A549 (cell line): ENCODE measurements at regions of chr10 and their contacts with region 1.

Region 1: DNA sequence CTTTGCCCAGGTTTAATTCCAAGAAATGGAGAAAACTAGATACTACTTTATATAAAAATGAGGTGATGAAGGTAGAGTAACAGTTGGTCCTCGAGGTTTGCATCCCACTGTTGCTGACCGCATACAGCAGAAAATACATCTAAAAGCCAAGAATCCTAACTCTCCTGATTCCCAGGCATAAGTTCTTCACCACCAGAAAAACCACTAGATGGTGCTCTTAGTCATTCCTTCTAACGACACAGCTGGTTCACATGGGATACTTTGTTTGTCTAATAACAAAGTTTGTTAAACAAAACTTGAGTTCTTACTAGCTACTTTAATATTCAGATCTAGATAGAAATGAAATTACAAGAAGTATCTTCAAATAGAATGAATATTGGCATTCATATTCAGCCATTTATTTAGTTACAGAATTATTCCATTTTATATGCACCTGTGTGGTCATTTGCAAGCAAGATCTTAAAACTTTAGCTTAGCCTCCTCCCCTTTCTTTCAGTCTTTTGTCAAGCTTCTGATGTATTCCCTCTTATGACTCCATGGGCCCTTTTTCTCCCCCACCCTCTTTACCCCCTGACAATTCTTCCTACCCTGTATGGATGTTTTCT is 54.1 kb upstream of the CYP26C1 start:
- DNase-seq: peak; percentile 13 to 60
- ATAC-seq: peak; percentile 93 to 95
- H3K4me3 ChIP-seq: no peak overlapping the region
- H3K27ac ChIP-seq: no peak overlapping the region
- H3K4me1 ChIP-seq: peaks cover 19% of the 10 kb centered on the region
- CTCF ChIP-seq: peak; percentile 87
- EP300 ChIP-seq: no peak
- POLR2A ChIP-seq: no peak
- RAD21 ChIP-seq: peak; percentile 82 to 86

Region 2: GRCh38 chr10:92729886-92730285 is 276.7 kb before region 1 on chr10:
- CTCF ChIA-PET with region 1: no interaction called
- POLR2A ChIA-PET with region 1: no interaction called
- DNase-seq: no peak
- ATAC-seq: no peak
- H3K4me3 ChIP-seq: no peak overlapping the region
- H3K27ac ChIP-seq: no peak overlapping the region
- H3K4me1 ChIP-seq: 0 out of 3 replicates have a peak, but pooled peaks cover 5% of the 10 kb centered on the region
- CTCF ChIP-seq: no peak
- EP300 ChIP-seq: no peak
- POLR2A ChIP-seq: no peak
- RAD21 ChIP-seq: no peak

Region 3: DNA sequence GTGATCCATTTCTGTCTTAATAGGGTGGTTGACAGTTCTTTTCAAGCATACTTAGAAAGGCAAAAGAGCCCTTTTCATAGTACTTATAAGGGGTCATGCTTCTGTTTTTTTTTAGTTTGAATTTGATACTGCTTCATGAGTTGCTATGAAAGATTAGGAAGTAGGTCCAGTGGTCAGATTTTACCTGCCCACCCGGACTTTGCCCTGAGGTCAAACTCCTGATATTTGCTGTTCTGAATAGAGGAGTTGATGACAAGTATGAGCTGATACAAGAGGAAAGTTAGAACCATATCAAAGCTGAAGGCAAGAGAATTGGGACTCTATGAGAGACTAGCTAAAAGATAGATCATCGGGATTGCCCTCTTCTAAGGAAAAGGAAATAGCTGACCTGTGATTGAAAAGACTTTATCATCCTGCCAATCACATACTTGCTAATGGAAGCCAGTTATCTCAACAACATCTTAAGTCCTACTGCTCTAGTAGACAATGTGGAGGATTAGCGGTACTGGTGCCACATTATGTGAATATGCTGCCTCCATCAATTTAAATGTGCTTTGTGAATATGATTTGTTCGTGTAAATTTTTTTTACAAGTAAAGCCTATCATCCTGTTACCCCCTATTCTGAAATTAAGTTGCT is 16.6 kb after region 1 on chr10:
- CTCF ChIA-PET with region 1: interaction called, 16 read pairs
- POLR2A ChIA-PET with region 1: no interaction called
- DNase-seq: no peak
- ATAC-seq: no peak
- H3K4me3 ChIP-seq: no peak overlapping the region
- H3K27ac ChIP-seq: no peak overlapping the region
- H3K4me1 ChIP-seq: peaks cover 7% of the 10 kb centered on the region
- CTCF ChIP-seq: no peak
- EP300 ChIP-seq: no peak
- POLR2A ChIP-seq: no peak
- RAD21 ChIP-seq: no peak

Region 4: DNA sequence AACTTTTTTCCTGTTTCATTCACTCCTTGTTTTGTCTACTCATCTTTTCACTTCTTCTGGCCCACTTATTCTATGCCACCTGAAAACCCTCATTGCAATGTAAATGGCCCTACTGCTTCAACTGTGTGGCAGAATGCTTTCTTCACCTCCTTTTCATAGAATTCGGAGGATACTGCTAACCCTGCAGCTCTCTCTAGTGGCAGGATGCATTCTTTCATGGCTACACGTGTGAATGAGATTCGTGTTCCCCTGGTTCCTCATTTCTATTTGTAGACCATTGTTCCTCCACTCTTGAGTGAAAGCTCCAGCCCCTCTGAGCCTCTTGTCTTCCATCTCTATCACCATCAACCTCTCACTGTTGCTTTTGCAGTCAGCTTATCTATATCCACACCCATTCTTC is 33.2 kb after region 1 on chr10:
- CTCF ChIA-PET with region 1: interaction called, 10 read pairs
- POLR2A ChIA-PET with region 1: no interaction called
- DNase-seq: peak in 1 of 2 experiments; percentile 46
- ATAC-seq: peak; percentile 81 to 84; a peak in 5 of 6 replicates
- H3K4me3 ChIP-seq: no peak overlapping the region
- H3K27ac ChIP-seq: no peak overlapping the region
- H3K4me1 ChIP-seq: peaks cover 6% of the 10 kb centered on the region; the same call in 2 of the 3 replicates
- CTCF ChIP-seq: peak; percentile 51
- EP300 ChIP-seq: no peak
- POLR2A ChIP-seq: no peak
- RAD21 ChIP-seq: peak; percentile 62 to 76

Region 5: DNA sequence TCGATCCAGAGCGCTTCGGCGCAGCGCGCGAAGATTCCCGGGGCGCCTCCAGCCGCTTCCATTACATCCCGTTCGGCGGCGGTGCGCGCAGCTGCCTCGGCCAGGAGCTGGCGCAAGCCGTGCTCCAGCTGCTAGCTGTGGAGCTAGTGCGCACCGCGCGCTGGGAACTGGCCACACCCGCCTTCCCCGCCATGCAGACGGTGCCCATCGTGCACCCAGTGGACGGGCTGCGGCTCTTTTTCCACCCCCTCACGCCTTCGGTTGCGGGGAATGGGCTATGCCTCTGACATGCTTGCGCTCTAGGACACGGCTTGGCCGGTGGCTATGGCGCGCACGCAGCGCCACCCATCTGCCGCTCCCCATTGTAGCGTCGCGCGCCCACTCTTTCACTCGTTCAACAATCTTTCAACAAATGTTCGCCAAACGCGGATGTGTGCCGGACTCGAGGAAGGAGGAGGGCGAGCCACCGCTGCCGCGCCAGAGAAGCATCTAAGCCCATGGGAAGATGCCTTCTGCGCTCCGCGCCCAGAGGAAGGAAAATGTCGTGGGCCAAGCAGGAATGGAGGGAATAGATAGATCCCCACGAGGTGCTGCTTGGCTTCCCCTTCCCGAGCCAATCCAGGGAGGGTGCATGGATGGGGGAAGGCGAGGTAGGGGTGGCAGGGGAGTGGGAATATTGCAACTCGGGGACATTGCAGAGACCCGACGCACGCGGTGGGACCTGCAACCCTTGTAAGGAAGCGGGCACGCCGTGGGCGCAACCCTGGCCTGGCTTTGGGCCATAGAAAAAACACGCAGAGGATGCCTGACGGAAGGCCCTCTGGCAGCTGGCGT is 62.1 kb after region 1 on chr10:
- CTCF ChIA-PET with region 1: interaction called, 85 read pairs
- POLR2A ChIA-PET with region 1: no interaction called
- DNase-seq: peak in 1 of 2 experiments; percentile 57
- ATAC-seq: peak; percentile 48 to 60; a peak in 5 of 6 replicates
- H3K4me3 ChIP-seq: peak overlapping the region; percentile 42
- H3K27ac ChIP-seq: peak overlapping the region in 1 of 2 experiments; percentile 37; a peak in 1 of 6 replicates
- H3K4me1 ChIP-seq: 0 out of 3 replicates have a peak, but pooled peaks cover 9% of the 10 kb centered on the region
- CTCF ChIP-seq: peak; percentile 36; the same call in 2 of the 3 replicates
- EP300 ChIP-seq: no peak
- POLR2A ChIP-seq: no peak
- RAD21 ChIP-seq: peak; percentile 39 to 47; a peak in 3 of 5 replicates

Region 6: DNA sequence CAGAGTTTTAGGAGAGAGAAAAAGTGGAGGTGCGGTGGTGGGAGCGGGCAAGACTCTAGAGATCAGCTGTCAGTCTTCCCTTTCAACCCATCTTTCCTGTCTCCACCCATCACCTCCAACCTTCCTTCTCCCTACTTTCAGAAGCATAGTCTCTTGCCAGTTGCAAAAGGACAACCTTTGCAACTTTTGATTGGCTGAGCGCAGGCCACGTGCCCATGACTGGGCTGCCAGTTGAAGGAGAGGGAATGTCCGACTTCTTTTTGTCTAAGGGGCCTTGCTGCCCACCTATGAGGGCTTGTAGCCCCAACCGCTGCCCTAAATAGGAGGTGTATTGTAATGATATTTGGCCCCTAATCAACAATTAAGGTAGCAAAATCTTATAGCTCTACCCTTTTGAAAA is 79.8 kb after region 1 on chr10:
- CTCF ChIA-PET with region 1: no interaction called
- POLR2A ChIA-PET with region 1: no interaction called
- DNase-seq: no peak
- ATAC-seq: no peak
- H3K4me3 ChIP-seq: no peak overlapping the region
- H3K27ac ChIP-seq: no peak overlapping the region
- H3K4me1 ChIP-seq: no peaks in the 10 kb centered on the region
- CTCF ChIP-seq: no peak
- EP300 ChIP-seq: no peak
- POLR2A ChIP-seq: no peak
- RAD21 ChIP-seq: no peak